CD14-positive monocyte (primary cell): ENCODE measurements at regions of chr11 and their contacts with region 1.

Region 1: GRCh38 chr11:62591448-62592145 is at the start of gene TUT1:
- DNase-seq: peak; percentile 98 to 99 (median 99)
- H3K4me3 ChIP-seq: peak within 1 kb of the TSS; percentile 67 to 98 (median 82)
- H3K4me3 Mint-ChIP-seq: peak within 1 kb of the TSS; percentile 92 to 95
- H3K27ac ChIP-seq: peak within 1 kb of the TSS; percentile 91 to 96
- H3K27ac Mint-ChIP-seq: peak within 1 kb of the TSS; percentile 95 to 99 (median 98)
- H3K4me1 ChIP-seq: peaks cover 27 to 41% of the 10 kb centered on the region in 2 donors
- H3K4me1 Mint-ChIP-seq: peaks cover 33% of the 10 kb centered on the region
- H3K27me3 ChIP-seq: no peaks in the 10 kb centered on the region
- H3K27me3 Mint-ChIP-seq: peaks cover 0 to 2% (median 0%) of the 10 kb centered on the region in 3 donors
- CTCF ChIP-seq: peak; percentile 19
- polyA plus RNA-seq, gene TUT1: 1.8 to 16.3 (median 2.1) TPM

Region 2: DNA sequence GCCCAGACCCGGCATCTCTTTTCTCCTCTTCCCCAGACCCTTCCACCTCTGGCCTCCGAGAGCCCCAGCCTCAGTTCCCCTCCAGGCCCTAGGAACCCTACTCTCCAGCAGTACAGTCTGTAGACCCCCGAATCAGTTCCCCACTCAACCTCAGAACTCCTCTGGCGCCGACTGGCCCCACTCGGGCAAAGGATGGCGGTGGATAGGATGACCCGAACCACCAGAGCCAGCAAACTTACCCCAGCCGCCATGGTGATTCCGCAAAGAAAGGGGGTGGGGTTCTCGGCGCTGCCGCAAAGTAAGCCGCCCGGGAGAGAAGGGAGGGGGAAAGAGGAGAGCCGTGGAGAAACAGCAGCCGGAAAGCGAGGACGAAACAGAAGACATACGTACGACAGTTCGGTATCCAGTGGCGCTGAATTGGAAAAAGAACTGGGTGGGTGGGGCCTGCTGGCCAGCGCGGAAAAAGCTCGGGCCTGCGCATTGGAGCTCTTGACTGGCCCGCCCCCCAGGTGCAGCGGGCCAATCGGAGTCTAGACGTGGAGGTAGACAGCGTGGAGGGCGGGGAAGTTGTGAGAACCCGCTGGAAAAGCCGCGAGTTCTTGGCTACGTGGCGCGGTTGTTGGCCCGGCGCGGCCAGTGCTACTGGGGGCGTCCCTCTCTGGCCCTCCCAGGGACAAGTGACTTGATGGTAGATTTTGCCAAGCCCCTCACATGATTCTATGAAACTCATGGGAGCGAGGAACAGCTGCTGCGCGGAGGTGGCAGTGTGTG is 17.8 kb before region 1 on chr11 and contains the start of gene EEF1G:
- intact Hi-C with region 1: loop called (anchors 2 kb)
- DNase-seq: peak; percentile 99
- H3K4me3 ChIP-seq: peak within 1 kb of the TSS; percentile 68 to 100 (median 91)
- H3K4me3 Mint-ChIP-seq: peak within 1 kb of the TSS; percentile 95 to 99
- H3K27ac ChIP-seq: peak within 1 kb of the TSS; percentile 77 to 85
- H3K27ac Mint-ChIP-seq: peak within 1 kb of the TSS; percentile 90 to 96 (median 94)
- H3K4me1 ChIP-seq: peaks cover 22 to 29% of the 10 kb centered on the region in 2 donors
- H3K4me1 Mint-ChIP-seq: peaks cover 44% of the 10 kb centered on the region
- H3K27me3 ChIP-seq: no peaks in the 10 kb centered on the region
- H3K27me3 Mint-ChIP-seq: peaks cover 0 to 2% (median 0%) of the 10 kb centered on the region in 3 donors
- CTCF ChIP-seq: no peak
- polyA plus RNA-seq, gene EEF1G: 490 to 603 (median 491) TPM

Region 3: GRCh38 chr11:62652161-62653006 is 60.8 kb after region 1 on chr11:
- intact Hi-C with region 1: loop called in 1 of 2 experiments (anchors 5 kb)
- DNase-seq: no peak
- H3K4me3 ChIP-seq: peak overlapping the region; percentile 67 to 97 (median 79)
- H3K4me3 Mint-ChIP-seq: peak overlapping the region; percentile 87 to 94
- H3K27ac ChIP-seq: peak overlapping the region; percentile 65 to 89
- H3K27ac Mint-ChIP-seq: peak overlapping the region; percentile 86 to 94 (median 91)
- H3K4me1 ChIP-seq: peaks cover 11 to 17% of the 10 kb centered on the region in 2 donors
- H3K4me1 Mint-ChIP-seq: peaks cover 23% of the 10 kb centered on the region
- H3K27me3 ChIP-seq: no peaks in the 10 kb centered on the region
- H3K27me3 Mint-ChIP-seq: peaks cover 0 to 3% (median 0%) of the 10 kb centered on the region in 3 donors
- CTCF ChIP-seq: no peak

Region 4: DNA sequence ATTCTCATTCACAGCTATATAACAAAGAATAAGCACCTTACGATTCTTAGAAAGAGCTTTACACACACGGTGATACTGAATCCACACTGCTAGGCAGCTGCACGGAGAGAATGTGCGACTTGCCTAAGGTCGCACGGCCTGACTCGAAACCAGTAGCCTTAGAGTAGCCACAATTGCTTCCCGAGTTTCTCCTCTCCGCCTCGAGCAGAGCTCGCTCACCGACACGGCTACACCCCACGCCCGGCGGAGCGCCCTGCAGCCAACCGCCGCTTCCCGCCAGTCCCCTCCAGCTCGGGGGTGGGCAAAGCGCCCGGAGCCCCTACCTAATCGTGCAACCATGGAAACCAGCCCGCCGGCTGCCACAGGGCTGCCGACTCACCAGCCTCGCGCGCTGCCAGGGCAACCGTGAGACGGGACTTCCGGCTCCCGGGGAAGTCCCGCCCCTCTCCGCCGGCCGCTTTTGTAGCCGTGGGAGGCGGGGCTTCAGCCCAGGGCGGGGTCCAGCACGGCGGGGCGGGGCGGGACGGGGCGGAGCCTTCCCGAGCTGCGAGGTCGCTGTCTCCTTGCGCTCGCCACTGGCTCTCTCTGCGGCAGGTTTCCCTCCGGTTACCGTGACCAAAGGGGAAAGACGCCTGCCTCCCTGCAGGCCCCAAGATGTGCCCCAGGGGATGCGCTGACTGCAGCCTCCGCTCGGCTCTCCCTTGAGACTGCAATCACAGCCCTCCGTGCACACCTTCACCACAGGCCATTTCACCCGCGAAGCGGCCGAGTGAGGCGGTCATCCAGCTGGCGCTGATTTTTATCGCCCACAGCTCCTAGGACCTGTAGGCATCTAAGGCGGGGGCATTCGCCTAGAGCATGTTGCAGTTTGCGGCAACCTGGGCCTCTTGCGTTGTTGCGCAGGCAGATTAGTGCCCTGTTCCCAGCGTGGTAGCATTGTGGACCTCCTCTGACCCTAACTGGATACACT is 114.6 kb after region 1 on chr11:
- intact Hi-C with region 1: loop called (anchors 10 kb)
- DNase-seq: peak; percentile 89 to 93 (median 91)
- H3K4me3 ChIP-seq: peak overlapping the region; percentile 70 to 91 (median 84)
- H3K4me3 Mint-ChIP-seq: peak overlapping the region; percentile 89 to 92
- H3K27ac ChIP-seq: peak overlapping the region; percentile 78 to 85
- H3K27ac Mint-ChIP-seq: peak overlapping the region; percentile 89 to 99 (median 94)
- H3K4me1 ChIP-seq: peaks cover 67 to 85% of the 10 kb centered on the region in 2 donors
- H3K4me1 Mint-ChIP-seq: peaks cover 57% of the 10 kb centered on the region
- H3K27me3 ChIP-seq: no peaks in the 10 kb centered on the region
- H3K27me3 Mint-ChIP-seq: no peaks in the 10 kb centered on the region
- CTCF ChIP-seq: no peak

Region 5: DNA sequence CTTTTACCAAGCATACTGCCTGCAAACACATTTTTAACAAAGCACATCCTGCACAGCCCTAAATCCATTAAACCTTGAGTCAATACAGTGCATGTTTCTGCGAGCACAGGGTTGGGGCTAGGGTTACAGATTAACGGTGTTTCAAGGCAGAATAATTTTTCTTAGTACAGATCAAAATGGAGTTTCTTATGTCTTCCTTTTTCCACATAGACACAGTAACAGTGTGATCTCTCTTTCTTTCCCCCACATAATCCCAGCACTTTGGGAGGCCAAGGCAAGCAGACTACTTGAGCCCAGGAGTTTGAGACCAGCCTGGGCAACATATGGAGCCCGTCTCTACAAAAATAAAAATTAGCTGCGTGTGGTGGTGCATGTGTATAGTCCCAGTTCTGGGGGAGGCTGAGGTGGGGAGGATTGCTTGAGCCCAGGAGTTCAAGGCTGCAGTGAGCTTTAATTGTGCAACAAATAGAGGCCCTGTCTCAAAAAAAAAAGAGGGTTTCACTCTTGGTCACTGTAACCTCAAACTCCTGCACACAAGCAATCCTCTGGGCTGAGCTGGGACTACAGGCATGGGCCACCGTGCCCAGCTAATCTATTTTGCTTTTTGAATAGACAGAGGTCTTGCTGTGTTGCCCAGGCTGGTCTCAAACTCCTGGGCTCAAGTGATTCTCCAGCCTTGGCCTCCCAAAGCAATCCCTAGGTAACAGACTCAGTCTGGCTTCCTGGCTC is 269.4 kb after region 1 on chr11:
- intact Hi-C with region 1: loop called in 1 of 2 experiments (anchors 10 kb)
- DNase-seq: no peak
- H3K4me3 ChIP-seq: no peak overlapping the region
- H3K4me3 Mint-ChIP-seq: no peak overlapping the region
- H3K27ac ChIP-seq: no peak overlapping the region
- H3K27ac Mint-ChIP-seq: peak overlapping the region in 2 of 7 donors; percentile 37 to 61
- H3K4me1 ChIP-seq: peaks cover 14 to 19% of the 10 kb centered on the region in 2 donors
- H3K4me1 Mint-ChIP-seq: peaks cover 25% of the 10 kb centered on the region
- H3K27me3 ChIP-seq: no peaks in the 10 kb centered on the region
- H3K27me3 Mint-ChIP-seq: no peaks in the 10 kb centered on the region
- CTCF ChIP-seq: no peak